ENCODE measurements at regions of chr20 and their contacts with region 1.

Region 1: DNA sequence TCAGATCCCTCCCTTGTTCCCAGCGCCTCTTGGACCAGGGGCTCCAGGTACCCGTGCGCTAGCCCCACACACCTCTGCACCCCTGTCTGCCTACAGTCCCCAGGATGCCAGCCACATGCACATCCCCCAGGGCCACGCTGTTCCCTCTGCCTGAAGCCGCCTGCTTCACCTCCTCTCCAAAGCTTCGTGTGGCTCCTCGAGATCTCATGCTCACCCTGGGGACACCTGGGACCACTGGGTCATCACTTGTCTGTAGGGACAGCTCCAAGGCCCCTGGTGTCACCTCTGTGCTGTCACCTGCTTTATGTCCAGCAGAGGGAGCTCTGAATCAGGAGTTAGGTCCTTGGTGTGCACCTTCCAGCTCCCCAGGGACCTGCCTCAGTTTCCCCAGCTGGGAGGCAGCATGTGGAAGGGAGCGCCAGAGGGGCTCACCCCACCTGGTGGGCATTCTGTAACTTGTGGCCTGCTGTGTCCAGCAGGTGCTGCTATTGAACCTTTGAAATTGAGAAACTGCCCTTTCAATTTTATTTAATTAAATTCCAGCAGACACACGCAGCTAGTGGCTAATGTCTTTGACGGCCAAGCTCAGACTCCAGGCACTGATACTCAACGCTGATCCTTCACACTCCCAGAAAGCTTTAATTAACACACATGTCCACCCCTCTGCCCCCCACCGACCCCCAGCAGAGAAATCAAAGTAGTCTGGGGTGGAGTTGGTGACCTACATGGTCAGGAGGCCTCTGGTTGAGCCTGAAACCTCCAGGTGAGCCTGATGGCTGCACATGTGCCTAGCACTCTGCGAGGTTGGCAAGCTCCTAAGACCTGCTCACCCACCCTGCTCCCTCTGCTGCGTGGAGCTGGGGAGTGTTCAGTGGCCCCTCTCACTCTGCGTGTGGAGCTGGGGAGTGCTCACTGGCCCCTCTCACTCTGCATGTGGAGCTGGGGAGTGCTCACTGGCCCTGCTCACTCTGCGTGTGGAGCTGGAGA is 7.6 kb upstream of the YTHDF1 start:
- DNase-seq: peak in 2 of 3 donors; percentile 36 to 46
- H3K4me3 ChIP-seq: no peak overlapping the region
- H3K27ac ChIP-seq: no peak overlapping the region
- H3K4me1 ChIP-seq: peaks cover 0 to 11% (median 4%) of the 10 kb centered on the region in 4 experiments
- H3K27me3 ChIP-seq: peaks cover 0 to 4% (median 2%) of the 10 kb centered on the region in 5 experiments

Region 2: GRCh38 chr20:63191400-63191799 is 32.1 kb before region 1 on chr20:
- CTCF ChIA-PET with region 1: interaction called, 10 read pairs
- POLR2A ChIA-PET with region 1: no interaction called
- DNase-seq: no peak
- H3K4me3 ChIP-seq: no peak overlapping the region
- H3K27ac ChIP-seq: no peak overlapping the region
- H3K4me1 ChIP-seq: no peaks in the 10 kb centered on the region
- H3K27me3 ChIP-seq: no peaks in the 10 kb centered on the region

Region 3: DNA sequence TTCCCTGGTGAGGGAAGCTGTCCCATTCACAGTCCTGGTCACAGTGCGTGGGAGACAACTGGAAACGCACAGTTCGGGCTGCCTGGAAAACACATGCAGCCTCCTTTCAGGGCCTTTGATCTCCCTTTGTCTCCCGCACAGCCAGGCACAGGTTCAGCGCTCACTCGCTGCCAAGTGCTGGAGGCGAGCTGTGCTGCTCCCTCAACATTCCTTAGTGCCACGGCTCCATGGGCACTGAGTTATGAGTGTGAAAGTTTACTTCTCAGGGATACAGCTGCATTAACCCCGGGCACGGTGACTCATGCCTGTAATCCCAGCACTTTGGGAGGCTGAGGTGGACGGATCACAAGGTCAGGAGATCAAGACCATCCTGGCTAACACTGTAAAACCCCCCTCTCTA is 16.6 kb before region 1 on chr20:
- CTCF ChIA-PET with region 1: interaction called, 54 read pairs
- POLR2A ChIA-PET with region 1: no interaction called
- DNase-seq: no peak
- H3K4me3 ChIP-seq: no peak overlapping the region
- H3K27ac ChIP-seq: no peak overlapping the region
- H3K4me1 ChIP-seq: no peaks in the 10 kb centered on the region
- H3K27me3 ChIP-seq: no peaks in the 10 kb centered on the region

Region 4: GRCh38 chr20:63246490-63247288 is 23.2 kb after region 1 on chr20:
- CTCF ChIA-PET with region 1: interaction called, 12 read pairs
- POLR2A ChIA-PET with region 1: no interaction called
- DNase-seq: no peak
- H3K4me3 ChIP-seq: peak overlapping the region in 1 of 7 experiments; percentile 11
- H3K27ac ChIP-seq: no peak overlapping the region
- H3K4me1 ChIP-seq: no peaks in the 10 kb centered on the region
- H3K27me3 ChIP-seq: peaks cover 0 to 62% (median 24%) of the 10 kb centered on the region in 5 experiments

Measured in common myeloid progenitor, CD34-positive (primary cell).